Activated CD4-positive, alpha-beta memory T cell treated with anti-CD3 and anti-CD28 coated beads for 36 hours (primary cell): ENCODE measurements at regions of chr12 and their contacts with region 1.

Region 1: GRCh38 chr12:19833775-19834501 is 394.6 kb downstream of the AEBP2 start:
- DNase-seq: peak; percentile 61
- H3K4me3 Mint-ChIP-seq: no peak overlapping the region
- H3K27ac Mint-ChIP-seq: peak overlapping the region; percentile 73
- H3K4me1 Mint-ChIP-seq: peaks cover 27% of the 10 kb centered on the region
- H3K27me3 Mint-ChIP-seq: no peaks in the 10 kb centered on the region

Region 2: DNA sequence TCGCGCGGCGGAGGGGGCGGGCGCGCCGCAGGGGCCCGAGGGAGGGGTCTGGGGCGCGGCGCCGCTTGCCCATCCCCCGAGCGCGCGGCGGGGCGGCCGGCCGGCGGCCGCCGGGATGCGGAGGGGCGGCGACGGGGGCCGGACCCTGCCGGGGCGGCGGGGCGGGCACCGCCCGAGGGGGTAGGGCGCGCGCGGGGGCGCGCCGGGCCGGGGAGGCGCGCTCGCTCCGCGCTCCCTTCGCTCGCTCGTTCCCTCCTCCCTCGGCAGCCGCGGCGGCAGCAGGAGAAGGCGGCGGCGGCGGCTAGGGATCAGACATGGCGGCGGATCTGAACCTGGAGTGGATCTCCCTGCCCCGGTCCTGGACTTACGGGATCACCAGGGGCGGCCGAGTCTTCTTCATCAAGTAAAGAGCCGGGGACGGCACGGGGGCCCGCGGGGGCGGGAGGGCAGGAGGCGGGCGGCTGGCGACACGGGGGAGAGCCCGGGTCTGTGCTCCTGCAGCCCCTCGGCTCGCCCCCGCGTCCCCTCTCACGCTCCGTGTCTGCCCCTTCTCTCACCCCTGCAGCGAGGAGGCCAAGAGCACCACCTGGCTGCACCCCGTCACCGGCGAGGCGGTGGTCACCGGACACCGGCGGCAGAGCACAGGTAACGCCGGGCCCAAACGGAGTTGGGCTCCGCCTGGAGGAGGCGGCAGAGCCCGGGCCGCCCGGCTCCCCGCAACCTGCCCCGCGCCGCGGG is 704.3 kb before region 1 on chr12 and contains the start of gene PLEKHA5:
- CTCF ChIA-PET with region 1: no interaction called
- POLR2A ChIA-PET with region 1: no interaction called
- intact Hi-C with region 1: loop called (anchors 5 kb)
- DNase-seq: peak; percentile 56
- H3K4me3 Mint-ChIP-seq: peak within 1 kb of the TSS; percentile 86
- H3K27ac Mint-ChIP-seq: no peak within 1 kb of the TSS
- H3K4me1 Mint-ChIP-seq: peaks cover 23% of the 10 kb centered on the region
- H3K27me3 Mint-ChIP-seq: peaks cover 3% of the 10 kb centered on the region
- total RNA-seq, gene PLEKHA5: 6.6 to 7.4 TPM

Region 3: DNA sequence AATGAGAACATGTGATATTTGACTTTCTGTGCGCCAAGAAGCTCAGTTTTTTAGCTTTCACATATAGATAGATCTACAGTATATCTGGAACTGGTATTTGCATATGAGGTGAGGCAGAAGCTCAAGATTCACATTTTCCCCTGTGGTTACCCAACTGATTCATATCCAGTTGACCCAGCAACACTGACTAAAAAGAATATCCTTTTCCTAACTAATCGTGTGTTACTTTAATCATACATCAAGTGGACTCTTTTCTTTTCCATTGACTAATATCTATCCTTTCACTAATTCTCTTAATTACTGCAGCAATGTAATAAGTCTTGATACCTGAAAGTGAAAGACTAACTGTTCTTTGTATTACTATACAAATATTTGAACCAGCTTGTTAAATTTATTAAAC is 158.6 kb before region 1 on chr12:
- CTCF ChIA-PET with region 1: no interaction called
- POLR2A ChIA-PET with region 1: no interaction called
- intact Hi-C with region 1: loop called (anchors 1 kb)
- DNase-seq: no peak
- H3K4me3 Mint-ChIP-seq: no peak overlapping the region
- H3K27ac Mint-ChIP-seq: no peak overlapping the region
- H3K4me1 Mint-ChIP-seq: peaks cover 32% of the 10 kb centered on the region
- H3K27me3 Mint-ChIP-seq: no peaks in the 10 kb centered on the region

Region 4: DNA sequence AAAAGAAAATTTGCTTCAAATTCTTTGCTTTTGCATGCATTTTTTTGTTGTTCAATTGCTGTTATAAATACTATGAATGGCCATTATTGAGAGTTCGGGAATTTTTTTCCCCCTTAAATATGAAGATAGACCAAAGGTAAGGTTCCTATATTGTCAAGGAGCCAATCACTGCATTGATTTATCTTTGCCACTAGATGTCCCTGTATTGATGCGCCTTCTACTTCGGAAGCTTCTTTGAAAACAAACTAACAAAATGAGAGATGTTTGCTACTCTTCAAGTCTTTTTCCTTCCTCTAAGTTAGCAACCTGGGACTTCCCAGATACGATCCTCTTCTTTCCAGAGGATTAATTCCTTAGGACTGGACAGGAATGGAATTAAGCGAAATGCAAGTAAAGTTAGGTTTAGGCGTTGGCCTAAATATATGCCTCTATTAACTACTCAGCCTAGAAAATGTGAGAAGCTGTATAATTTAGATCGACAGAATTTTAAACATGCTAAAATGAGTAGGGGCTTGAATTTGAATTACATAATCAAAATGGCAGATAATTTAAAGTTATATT is 76.5 kb before region 1 on chr12:
- CTCF ChIA-PET with region 1: interaction called, 10 read pairs
- POLR2A ChIA-PET with region 1: no interaction called
- intact Hi-C with region 1: loop called (anchors 2 kb)
- DNase-seq: no peak
- H3K4me3 Mint-ChIP-seq: no peak overlapping the region
- H3K27ac Mint-ChIP-seq: no peak overlapping the region
- H3K4me1 Mint-ChIP-seq: peaks cover 15% of the 10 kb centered on the region
- H3K27me3 Mint-ChIP-seq: peaks cover 4% of the 10 kb centered on the region

Region 5: GRCh38 chr12:19800884-19801283 is 33.1 kb before region 1 on chr12:
- CTCF ChIA-PET with region 1: interaction called, 4 read pairs
- POLR2A ChIA-PET with region 1: interaction called, 4 read pairs
- intact Hi-C with region 1: loop called (anchors 1 kb)
- DNase-seq: no peak
- H3K4me3 Mint-ChIP-seq: no peak overlapping the region
- H3K27ac Mint-ChIP-seq: peak overlapping the region; percentile 1
- H3K4me1 Mint-ChIP-seq: peaks cover 26% of the 10 kb centered on the region
- H3K27me3 Mint-ChIP-seq: no peaks in the 10 kb centered on the region